ENCODE measurements at regions of chr5 and their contacts with region 1.

Region 1: GRCh38 chr5:154937718-154938466 is at the start of gene GEMIN5:
- DNase-seq: peak; percentile 97
- H3K4me3 ChIP-seq: peak within 1 kb of the TSS; percentile 61 to 97 (median 84)
- H3K27ac ChIP-seq: peak within 1 kb of the TSS; percentile 51 to 83 (median 72)
- H3K4me1 ChIP-seq: peaks cover 28 to 71% (median 46%) of the 10 kb centered on the region in 6 donors
- H3K27me3 ChIP-seq: no peaks in the 10 kb centered on the region
- CTCF ChIP-seq: peak in 1 of 11 experiments; percentile 26
- POLR2A ChIP-seq: peak in 1 of 3 donors; percentile 33
- total RNA-seq, gene GEMIN5: 11.5 to 16.1 (median 14.9) TPM

Region 2: DNA sequence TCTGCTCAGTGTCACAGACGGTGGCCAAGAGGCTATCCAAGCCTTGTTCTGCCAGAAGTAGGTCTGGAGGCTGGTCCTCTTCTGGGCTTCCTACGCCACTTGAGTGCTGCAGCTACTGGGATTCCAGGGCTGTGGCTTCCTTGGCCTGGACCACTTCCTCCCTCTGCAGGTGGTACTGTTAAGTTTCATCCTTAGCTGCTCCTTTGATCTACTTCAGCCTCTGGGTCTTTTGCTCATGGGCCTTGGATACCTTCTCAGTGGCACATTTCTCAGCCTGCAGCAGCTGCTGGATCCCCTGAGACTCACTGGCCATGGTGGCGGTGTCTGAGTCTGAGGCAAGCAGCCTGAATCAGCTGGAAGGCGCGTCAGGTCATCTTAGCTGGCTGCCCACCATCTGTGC is 69.2 kb before region 1 on chr5:
- intact Hi-C with region 1: loop called (anchors 10 kb)
- DNase-seq: no peak
- H3K4me3 ChIP-seq: no peak overlapping the region
- H3K27ac ChIP-seq: no peak overlapping the region
- H3K4me1 ChIP-seq: peaks cover 0 to 34% (median 10%) of the 10 kb centered on the region in 6 donors
- H3K27me3 ChIP-seq: no peaks in the 10 kb centered on the region
- CTCF ChIP-seq: no peak
- POLR2A ChIP-seq: no peak

Region 3: DNA sequence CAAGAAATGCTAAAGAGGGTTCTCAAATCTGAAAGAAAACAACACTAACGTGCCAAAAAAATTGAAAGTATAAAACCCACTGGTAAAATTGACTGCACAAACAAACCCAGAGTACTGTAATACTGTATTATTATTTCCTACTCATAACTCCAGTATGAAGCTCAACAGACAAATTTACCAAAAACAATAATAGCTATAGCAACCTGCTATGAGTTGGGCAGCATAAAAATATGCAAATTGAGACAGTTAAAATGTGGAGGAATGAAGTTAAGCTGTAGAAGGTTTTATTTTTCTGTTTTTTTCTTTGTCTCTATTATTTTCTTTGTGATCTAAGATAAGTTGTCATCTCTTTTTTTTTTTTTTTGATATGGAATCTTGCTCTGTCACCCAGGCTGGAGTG is 91.3 kb after region 1 on chr5:
- intact Hi-C with region 1: no loop called
- DNase-seq: no peak
- H3K4me3 ChIP-seq: no peak overlapping the region
- H3K27ac ChIP-seq: no peak overlapping the region
- H3K4me1 ChIP-seq: no peaks in the 10 kb centered on the region
- H3K27me3 ChIP-seq: peaks cover 0 to 6% (median 0%) of the 10 kb centered on the region in 7 donors
- CTCF ChIP-seq: no peak
- POLR2A ChIP-seq: no peak

Measured in spleen (tissue), 13 donors.